Posterior vena cava (tissue), 2 donors: ENCODE measurements at regions of chr18 and their contacts with region 1.

Region 1: DNA sequence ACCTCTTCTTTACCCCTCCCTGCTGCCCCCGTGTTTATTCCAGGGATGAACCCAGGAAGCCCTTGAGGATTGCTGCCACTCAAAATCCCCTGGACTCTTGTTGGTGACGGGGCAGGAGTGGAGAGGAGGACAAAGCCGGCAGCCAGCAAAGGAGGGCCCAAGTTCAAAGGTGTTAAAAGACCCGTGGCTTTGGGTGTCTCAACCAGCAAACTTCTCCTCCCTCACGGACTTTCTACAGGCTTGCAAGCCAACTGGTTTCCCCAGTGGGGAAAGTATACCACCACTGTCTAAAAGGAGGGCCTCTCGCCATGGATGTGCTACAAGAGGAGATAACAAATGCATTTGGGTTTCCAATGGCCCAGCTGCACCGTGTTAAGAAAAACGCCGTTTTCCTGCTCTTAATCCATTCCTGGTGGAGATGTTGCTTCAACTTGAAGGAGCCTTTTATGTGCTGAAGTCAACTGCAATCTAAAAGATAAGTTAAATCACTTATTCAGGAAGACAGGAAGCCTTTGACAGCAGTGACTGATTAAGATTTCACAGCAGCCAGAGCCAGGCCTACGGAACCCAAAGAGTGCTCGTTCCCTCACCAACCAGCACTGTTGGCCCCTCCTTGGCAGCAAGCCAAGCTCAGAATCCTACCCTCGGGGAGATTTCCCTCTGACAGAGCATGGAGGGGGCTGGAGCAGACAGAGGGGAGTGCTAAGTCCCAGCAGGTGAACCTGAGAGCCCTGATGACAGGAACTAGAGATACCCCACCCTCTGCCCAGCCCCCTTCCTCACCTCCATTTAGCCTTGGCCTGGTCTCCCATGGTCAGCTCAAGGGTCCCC is 57.8 kb downstream of the ZBTB7C start:
- DNase-seq: no peak

Region 2: DNA sequence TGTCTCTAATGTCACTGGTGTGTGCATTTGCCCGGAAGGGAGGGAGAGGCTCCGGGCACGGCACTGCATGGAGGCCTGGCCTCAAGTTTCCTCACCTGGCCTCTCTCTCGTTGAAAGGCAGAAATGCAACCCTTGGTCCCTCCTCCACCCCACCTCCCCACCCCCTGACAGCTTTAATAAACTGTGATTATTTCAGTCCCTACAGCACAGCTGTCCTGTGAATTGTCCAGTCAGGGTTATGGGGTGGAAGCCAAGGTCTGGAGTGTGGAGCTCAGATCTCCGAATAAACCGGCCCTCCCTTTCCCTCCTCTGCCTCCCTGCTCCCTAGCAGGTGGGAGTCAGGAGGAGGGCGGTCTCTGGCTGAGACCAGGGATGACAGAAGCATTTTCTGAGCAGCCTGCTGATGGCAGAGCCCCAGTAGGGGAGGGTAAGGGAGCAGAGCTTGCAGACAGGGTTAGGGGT is 221.8 kb before region 1 on chr18:
- intact Hi-C with region 1: no loop called
- DNase-seq: no peak

Region 3: DNA sequence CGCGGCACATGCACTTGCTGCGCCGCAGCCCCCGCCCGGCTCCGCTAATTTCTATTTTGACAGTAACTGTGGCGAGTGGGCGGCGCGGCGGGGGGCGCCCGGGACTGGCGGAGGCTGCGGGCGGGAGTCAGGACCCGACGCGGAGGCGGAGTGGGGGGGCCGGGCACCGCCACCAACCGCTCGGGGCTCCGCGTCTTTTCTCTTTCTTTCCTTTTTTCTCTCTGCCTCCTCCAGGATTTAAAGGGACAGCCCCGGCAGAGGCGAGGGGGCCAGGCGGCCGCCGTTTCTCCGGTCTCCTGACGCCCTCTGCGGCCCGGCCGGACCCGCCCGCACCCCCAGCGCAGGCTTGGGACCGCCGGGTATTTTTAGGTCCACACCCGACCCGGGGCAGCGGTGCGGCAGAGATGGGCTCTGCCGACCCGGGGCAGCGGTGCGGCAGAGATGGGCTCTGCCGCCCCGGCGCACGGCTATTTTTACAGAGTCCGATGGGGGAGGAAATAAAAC is 58.2 kb after region 1 on chr18:
- intact Hi-C with region 1: loop called in 1 of 2 experiments (anchors 2 kb)
- DNase-seq: no peak